ENCODE measurements at regions of chr6 and their contacts with region 1.

Region 1: GRCh38 chr6:31197559-31198305 is 27.2 kb upstream of the POU5F1 start:
- DNase-seq: peak; percentile 93 to 99 (median 96)
- H3K4me3 ChIP-seq: peak overlapping the region; percentile 62 to 99
- H3K4me3 Mint-ChIP-seq: peak overlapping the region; percentile 87 to 96 (median 94)
- H3K27ac ChIP-seq: peak overlapping the region; percentile 96
- H3K27ac Mint-ChIP-seq: peak overlapping the region; percentile 93 to 100 (median 99)
- H3K4me1 ChIP-seq: peaks cover 47% of the 10 kb centered on the region
- H3K4me1 Mint-ChIP-seq: peaks cover 41 to 72% (median 53%) of the 10 kb centered on the region in 4 donors
- H3K27me3 ChIP-seq: no peaks in the 10 kb centered on the region
- H3K27me3 Mint-ChIP-seq: peaks cover 0 to 3% of the 10 kb centered on the region in 2 donors

Region 2: DNA sequence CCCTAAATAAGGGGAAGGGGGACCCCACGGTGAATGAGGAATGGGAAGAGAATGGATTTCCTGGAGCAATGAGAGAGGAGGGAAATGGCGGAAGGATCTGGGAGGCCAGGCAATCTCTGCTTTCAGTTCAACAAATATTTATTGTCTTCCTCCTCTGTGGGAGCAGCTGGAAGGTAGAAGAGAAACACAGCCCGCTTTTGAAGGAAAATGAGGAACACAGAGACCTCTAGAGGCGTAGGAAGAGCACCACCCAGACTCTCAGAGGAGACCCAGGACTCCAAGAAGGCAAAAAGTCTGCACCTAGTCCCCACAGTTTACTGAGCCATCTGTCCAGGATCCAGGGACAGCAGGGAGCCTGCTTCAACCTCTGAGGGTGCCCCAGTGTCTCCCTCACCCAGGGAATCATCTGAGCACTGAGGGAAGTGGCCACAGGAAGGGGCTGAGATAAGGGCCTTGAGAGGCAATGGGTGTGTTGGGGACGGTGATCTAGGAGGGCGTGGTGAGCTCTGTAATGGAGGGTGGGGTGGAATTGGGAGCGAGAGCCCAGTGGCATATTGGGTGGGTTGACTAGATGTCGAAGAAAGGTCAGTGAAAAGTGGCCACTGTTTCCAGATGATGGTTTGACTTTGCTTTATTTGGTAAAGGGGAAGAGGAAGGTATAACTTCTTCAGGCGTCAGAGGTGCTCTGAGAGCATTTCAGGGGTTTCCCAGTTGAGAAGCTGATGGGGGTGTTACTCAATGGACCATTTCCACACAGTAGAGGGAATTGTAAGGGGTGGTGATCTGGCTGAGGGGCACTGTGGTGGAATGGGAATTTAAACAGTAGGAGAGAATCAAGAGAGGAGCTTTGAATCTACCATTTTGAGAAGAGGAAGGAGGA is 82.5 kb before region 1 on chr6:
- CTCF ChIA-PET with region 1: no interaction called
- POLR2A ChIA-PET with region 1: no interaction called
- intact Hi-C with region 1: no loop called
- DNase-seq: peak in 1 of 5 donors; percentile 40
- H3K4me3 ChIP-seq: no peak overlapping the region
- H3K4me3 Mint-ChIP-seq: peak overlapping the region in 2 of 8 donors; percentile 16 to 41
- H3K27ac ChIP-seq: no peak overlapping the region
- H3K27ac Mint-ChIP-seq: peak overlapping the region in 4 of 7 donors; percentile 12 to 80 (median 46)
- H3K4me1 ChIP-seq: peaks cover 5% of the 10 kb centered on the region
- H3K4me1 Mint-ChIP-seq: peaks cover 2 to 8% (median 5%) of the 10 kb centered on the region in 4 donors
- H3K27me3 ChIP-seq: no peaks in the 10 kb centered on the region
- H3K27me3 Mint-ChIP-seq: peaks cover 2 to 3% of the 10 kb centered on the region in 2 donors

Region 3: GRCh38 chr6:31128093-31128676 is 69.5 kb before region 1 on chr6:
- CTCF ChIA-PET with region 1: interaction called, 16 read pairs
- POLR2A ChIA-PET with region 1: interaction called, 4 read pairs
- intact Hi-C with region 1: loop called (anchors 2 kb)
- DNase-seq: peak; percentile 57 to 70 (median 62)
- H3K4me3 ChIP-seq: no peak overlapping the region
- H3K4me3 Mint-ChIP-seq: no peak overlapping the region
- H3K27ac ChIP-seq: no peak overlapping the region
- H3K27ac Mint-ChIP-seq: peak overlapping the region in 3 of 7 donors; percentile 7 to 52 (median 24)
- H3K4me1 ChIP-seq: peaks cover 3% of the 10 kb centered on the region
- H3K4me1 Mint-ChIP-seq: peaks cover 2 to 8% (median 7%) of the 10 kb centered on the region in 4 donors
- H3K27me3 ChIP-seq: no peaks in the 10 kb centered on the region
- H3K27me3 Mint-ChIP-seq: peaks cover 3 to 6% of the 10 kb centered on the region in 2 donors

Region 4: GRCh38 chr6:31180502-31180901 is 17.2 kb before region 1 on chr6:
- CTCF ChIA-PET with region 1: interaction called, 6 read pairs
- POLR2A ChIA-PET with region 1: interaction called, 16 read pairs
- intact Hi-C with region 1: no loop called
- DNase-seq: peak; percentile 55 to 79 (median 66)
- H3K4me3 ChIP-seq: peak overlapping the region in 1 of 2 donors; percentile 22
- H3K4me3 Mint-ChIP-seq: peak overlapping the region; percentile 80 to 89 (median 84)
- H3K27ac ChIP-seq: peak overlapping the region; percentile 43
- H3K27ac Mint-ChIP-seq: peak overlapping the region in 6 of 7 donors; percentile 25 to 76 (median 66)
- H3K4me1 ChIP-seq: peaks cover 11% of the 10 kb centered on the region
- H3K4me1 Mint-ChIP-seq: peaks cover 11 to 27% (median 17%) of the 10 kb centered on the region in 4 donors
- H3K27me3 ChIP-seq: no peaks in the 10 kb centered on the region
- H3K27me3 Mint-ChIP-seq: no peaks in the 10 kb centered on the region

Region 5: DNA sequence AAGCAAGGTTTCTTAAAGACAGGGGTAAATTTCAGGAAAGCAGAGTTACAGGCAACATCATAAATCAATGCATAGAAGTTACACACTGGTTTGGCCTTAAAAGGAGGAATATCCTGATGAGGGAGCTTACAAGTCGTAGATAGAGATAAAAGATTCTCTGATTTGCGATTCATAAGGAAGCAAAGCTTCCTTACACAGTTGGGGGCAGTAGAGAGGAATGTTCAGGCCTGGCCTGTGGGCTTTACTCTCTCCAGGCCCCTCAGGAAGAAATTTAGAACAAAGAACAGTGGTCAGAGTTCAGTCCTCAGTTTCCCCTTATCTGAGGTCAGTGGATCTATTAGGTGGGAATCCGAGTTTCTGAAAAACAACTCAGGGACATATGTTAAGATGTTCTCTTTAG is 54.9 kb after region 1 on chr6:
- CTCF ChIA-PET with region 1: interaction called, 4 read pairs
- POLR2A ChIA-PET with region 1: interaction called, 15 read pairs
- intact Hi-C with region 1: no loop called
- DNase-seq: no peak
- H3K4me3 ChIP-seq: no peak overlapping the region
- H3K4me3 Mint-ChIP-seq: no peak overlapping the region
- H3K27ac ChIP-seq: no peak overlapping the region
- H3K27ac Mint-ChIP-seq: no peak overlapping the region
- H3K4me1 ChIP-seq: no peaks in the 10 kb centered on the region
- H3K4me1 Mint-ChIP-seq: peaks cover 0 to 5% (median 4%) of the 10 kb centered on the region in 4 donors
- H3K27me3 ChIP-seq: no peaks in the 10 kb centered on the region
- H3K27me3 Mint-ChIP-seq: peaks cover 8 to 10% of the 10 kb centered on the region in 2 donors

Region 6: DNA sequence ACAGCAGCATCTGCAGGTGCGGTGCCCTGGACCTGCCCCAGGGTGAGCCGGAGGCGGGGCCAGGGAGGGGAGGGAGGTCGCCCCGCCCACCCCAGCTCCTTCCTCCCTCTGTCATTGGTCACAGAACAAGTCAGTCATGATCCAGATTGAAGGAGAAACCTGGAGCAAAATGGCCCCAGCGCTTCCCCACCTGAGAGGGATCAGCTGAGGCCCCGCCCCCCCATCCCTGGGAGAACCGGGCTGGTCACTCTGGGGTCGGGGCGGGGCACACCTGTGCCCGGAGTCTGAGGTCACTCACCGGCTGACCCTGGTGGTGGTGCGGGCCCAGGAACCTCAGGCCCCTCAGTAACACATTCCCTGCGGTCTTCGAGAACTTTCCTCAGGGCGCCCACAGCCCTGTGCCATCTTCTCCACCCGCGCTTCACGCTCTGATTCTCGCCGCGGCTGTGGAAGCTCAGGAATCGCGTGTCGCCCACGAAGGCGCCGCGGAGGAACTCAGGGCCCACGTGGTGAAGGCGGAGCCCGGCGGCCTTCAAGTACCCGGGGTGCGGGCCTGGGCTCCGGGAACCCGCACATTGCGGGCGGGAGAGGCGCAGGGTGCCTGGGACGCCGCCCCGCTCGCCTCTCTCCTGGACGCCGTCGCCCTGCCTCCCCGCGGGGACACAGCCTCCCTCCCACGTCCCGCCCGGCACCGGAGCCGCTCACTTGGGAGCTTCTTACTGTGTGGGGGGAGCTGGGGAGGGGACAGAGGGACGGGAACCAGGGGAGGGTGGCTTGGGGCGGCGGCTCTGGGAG is 110.5 kb after region 1 on chr6:
- CTCF ChIA-PET with region 1: interaction called, 3 read pairs
- POLR2A ChIA-PET with region 1: interaction called, 30 read pairs
- intact Hi-C with region 1: loop called (anchors 1 kb)
- DNase-seq: peak; percentile 69 to 83 (median 76)
- H3K4me3 ChIP-seq: peak overlapping the region; percentile 55 to 60
- H3K4me3 Mint-ChIP-seq: peak overlapping the region; percentile 84 to 94 (median 88)
- H3K27ac ChIP-seq: no peak overlapping the region
- H3K27ac Mint-ChIP-seq: peak overlapping the region in 4 of 7 donors; percentile 87 to 96 (median 89)
- H3K4me1 ChIP-seq: peaks cover 12% of the 10 kb centered on the region
- H3K4me1 Mint-ChIP-seq: peaks cover 1 to 14% (median 3%) of the 10 kb centered on the region in 4 donors
- H3K27me3 ChIP-seq: no peaks in the 10 kb centered on the region
- H3K27me3 Mint-ChIP-seq: peaks cover 8 to 9% of the 10 kb centered on the region in 2 donors

Region 7: DNA sequence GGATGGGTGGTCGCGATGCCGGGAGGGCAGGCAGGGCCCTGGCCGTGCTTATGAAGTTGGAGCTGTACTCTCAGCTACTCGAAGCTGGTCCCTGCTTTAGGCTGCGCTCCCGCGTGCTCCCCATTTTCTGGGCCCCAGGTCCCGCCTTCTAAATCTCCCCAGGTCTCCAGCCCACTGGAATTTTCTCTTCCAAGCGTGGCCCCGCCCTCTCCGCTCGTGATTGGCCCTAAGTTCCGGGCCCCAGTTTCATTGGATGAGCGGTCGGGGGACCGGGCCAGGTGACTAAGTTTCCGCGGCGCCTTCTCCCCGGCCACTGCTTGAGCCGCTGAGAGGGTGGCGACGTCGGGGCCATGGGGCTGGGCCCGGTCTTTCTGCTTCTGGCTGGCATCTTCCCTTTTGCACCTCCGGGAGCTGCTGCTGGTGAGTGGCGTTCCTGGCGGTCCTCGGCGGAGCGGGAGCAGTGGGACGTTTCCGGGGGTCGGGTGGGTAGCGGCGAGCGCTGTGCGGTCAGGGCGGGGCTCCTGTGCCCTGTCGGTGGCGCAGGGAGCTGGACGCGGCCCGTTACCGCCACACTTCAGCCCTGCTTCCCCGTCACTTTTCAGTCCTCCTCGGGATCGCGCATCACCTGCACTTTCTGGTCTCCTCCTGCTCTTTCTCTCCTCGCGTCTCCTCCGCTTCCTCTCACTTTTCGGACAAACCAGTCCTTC is 205.7 kb after region 1 on chr6 and contains the start of gene MICA:
- CTCF ChIA-PET with region 1: no interaction called
- POLR2A ChIA-PET with region 1: interaction called, 30 read pairs
- intact Hi-C with region 1: no loop called
- DNase-seq: peak; percentile 50 to 79 (median 54)
- H3K4me3 ChIP-seq: peak within 1 kb of the TSS; percentile 36 to 69
- H3K4me3 Mint-ChIP-seq: peak within 1 kb of the TSS; percentile 86 to 98 (median 97)
- H3K27ac ChIP-seq: peak within 1 kb of the TSS; percentile 76
- H3K27ac Mint-ChIP-seq: peak within 1 kb of the TSS; percentile 75 to 97 (median 91)
- H3K4me1 ChIP-seq: peaks cover 78% of the 10 kb centered on the region
- H3K4me1 Mint-ChIP-seq: peaks cover 55 to 93% (median 70%) of the 10 kb centered on the region in 4 donors
- H3K27me3 ChIP-seq: no peaks in the 10 kb centered on the region
- H3K27me3 Mint-ChIP-seq: no peaks in the 10 kb centered on the region
- total RNA-seq, gene MICA: 18.5 to 21.2 TPM